T-cell (primary cell): ENCODE measurements at regions of chr12 and their contacts with region 1.

Region 1: GRCh38 chr12:88556213-88556774 is 24.0 kb downstream of the KITLG start:
- DNase-seq: no peak
- ATAC-seq: no peak
- H3K4me3 ChIP-seq: no peak overlapping the region
- H3K4me3 Mint-ChIP-seq: no peak overlapping the region
- H3K27ac ChIP-seq: no peak overlapping the region
- H3K27ac Mint-ChIP-seq: no peak overlapping the region
- H3K4me1 ChIP-seq: no peaks in the 10 kb centered on the region
- H3K4me1 Mint-ChIP-seq: no peaks in the 10 kb centered on the region
- H3K27me3 ChIP-seq: no peaks in the 10 kb centered on the region
- H3K27me3 Mint-ChIP-seq: no peaks in the 10 kb centered on the region

Region 2: GRCh38 chr12:88490425-88490824 is 65.9 kb before region 1 on chr12:
- CTCF ChIA-PET with region 1: interaction called in 1 of 2 experiments, 11 read pairs
- POLR2A ChIA-PET with region 1: no interaction called
- DNase-seq: no peak
- ATAC-seq: no peak
- H3K4me3 ChIP-seq: no peak overlapping the region
- H3K4me3 Mint-ChIP-seq: no peak overlapping the region
- H3K27ac ChIP-seq: no peak overlapping the region
- H3K27ac Mint-ChIP-seq: no peak overlapping the region
- H3K4me1 ChIP-seq: no peaks in the 10 kb centered on the region
- H3K4me1 Mint-ChIP-seq: no peaks in the 10 kb centered on the region
- H3K27me3 ChIP-seq: no peaks in the 10 kb centered on the region
- H3K27me3 Mint-ChIP-seq: no peaks in the 10 kb centered on the region